Naive thymus-derived CD8-positive, alpha-beta T cell (primary cell): ENCODE measurements at regions of chr20 and their contacts with region 1.

Region 1: DNA sequence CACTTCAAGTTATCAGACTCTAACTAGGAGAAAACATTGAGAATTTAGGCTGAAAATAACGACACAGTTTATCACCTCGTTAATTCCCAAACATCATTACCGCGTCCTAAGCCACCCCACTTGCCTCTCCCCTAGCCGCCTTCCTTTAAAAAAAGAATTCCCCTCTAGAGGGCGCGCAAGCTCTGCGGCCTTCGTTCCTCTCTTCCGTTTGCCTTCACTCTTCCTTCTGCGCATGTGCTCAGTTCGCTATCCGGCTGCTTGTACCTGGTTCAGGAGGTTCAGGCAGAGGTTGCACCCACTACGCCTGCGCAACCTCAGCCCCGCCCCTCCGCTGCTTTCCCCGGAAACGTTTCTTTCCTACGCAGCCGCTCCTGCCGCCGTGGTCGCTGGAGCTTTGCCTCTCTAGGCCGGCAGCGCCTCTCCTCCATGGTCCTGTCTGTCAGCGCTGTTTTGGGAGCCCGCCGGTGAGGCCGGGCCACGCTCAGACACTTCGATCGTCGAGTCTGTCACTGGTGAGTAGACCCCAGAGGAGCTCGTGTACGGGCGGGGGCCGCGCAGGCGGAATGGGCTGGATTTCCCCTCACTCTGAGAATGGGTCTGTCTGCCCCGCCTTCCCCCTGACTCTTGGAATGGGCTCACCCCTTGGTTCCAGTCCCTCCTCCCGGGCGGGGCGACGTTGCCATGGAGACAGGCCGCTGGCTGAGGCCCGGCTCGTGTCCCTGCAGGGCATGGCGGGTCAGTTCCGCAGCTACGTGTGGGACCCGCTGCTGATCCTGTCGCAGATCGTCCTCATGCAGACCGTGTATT is at the start of gene SYS1:
- DNase-seq: peak; percentile 96 to 99 (median 99)
- ATAC-seq: peak; percentile 82 to 84
- H3K4me3 Mint-ChIP-seq: peak within 1 kb of the TSS; percentile 90 to 100 (median 98)
- H3K27ac Mint-ChIP-seq: peak within 1 kb of the TSS; percentile 99 to 100 (median 100)
- H3K4me1 Mint-ChIP-seq: peaks cover 23 to 54% (median 46%) of the 10 kb centered on the region in 4 donors
- H3K27me3 Mint-ChIP-seq: no peaks in the 10 kb centered on the region
- polyA plus RNA-seq, gene SYS1: 34.2 to 46.1 (median 36.2) TPM

Region 2: DNA sequence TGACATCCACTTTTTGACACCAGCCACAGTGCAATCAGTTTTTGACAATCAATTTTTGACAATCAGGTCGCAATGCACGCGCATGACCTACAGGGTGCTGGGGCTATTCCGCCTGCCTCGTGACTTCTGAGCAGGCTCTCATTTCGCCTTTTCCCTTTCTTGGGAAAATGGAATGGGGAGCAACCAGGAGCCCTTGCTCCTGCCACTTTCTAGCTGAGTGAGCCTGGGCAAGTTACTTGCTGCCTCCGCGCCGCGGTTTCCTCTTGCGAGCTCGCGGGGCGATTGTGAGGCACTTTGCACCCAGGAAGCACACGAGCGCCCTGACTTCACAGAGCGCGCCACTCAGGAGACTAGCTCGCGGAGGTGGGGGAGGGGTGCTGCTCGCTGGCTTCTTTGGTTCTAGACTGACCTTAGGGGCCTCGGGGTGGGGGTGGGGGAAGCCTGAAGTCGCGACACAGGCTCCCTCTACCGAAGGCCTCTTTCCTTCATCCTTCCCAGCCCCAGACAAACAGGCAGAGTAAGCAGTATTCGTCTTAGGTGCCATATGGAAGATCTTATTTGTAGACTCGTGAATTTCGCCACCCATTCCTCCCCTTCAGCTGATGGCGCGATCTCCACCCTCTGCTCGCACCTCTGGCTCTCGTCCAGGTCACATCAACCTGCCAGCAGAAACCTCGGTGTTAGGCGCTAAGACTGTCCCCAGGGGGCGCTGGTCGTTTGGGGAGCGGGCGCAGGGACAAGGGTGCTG is 10.5 kb after region 1 on chr20:
- POLR2A ChIA-PET with region 1: interaction called, 95 read pairs
- DNase-seq: peak; percentile 83 to 94 (median 88)
- ATAC-seq: peak; percentile 89 to 90
- H3K4me3 Mint-ChIP-seq: peak overlapping the region; percentile 86 to 96 (median 90)
- H3K27ac Mint-ChIP-seq: peak overlapping the region; percentile 79 to 98 (median 96)
- H3K4me1 Mint-ChIP-seq: peaks cover 10 to 46% (median 39%) of the 10 kb centered on the region in 4 donors
- H3K27me3 Mint-ChIP-seq: no peaks in the 10 kb centered on the region

Region 3: GRCh38 chr20:45406259-45407066 is 43.5 kb after region 1 on chr20:
- POLR2A ChIA-PET with region 1: interaction called, 25 read pairs
- DNase-seq: peak; percentile 23 to 70 (median 45)
- ATAC-seq: peak; percentile 58 to 64
- H3K4me3 Mint-ChIP-seq: peak overlapping the region; percentile 80 to 91 (median 82)
- H3K27ac Mint-ChIP-seq: peak overlapping the region in 8 of 10 donors; percentile 79 to 93 (median 86)
- H3K4me1 Mint-ChIP-seq: peaks cover 12 to 30% (median 25%) of the 10 kb centered on the region in 4 donors
- H3K27me3 Mint-ChIP-seq: peaks cover 0 to 2% (median 0%) of the 10 kb centered on the region in 5 donors

Region 4: DNA sequence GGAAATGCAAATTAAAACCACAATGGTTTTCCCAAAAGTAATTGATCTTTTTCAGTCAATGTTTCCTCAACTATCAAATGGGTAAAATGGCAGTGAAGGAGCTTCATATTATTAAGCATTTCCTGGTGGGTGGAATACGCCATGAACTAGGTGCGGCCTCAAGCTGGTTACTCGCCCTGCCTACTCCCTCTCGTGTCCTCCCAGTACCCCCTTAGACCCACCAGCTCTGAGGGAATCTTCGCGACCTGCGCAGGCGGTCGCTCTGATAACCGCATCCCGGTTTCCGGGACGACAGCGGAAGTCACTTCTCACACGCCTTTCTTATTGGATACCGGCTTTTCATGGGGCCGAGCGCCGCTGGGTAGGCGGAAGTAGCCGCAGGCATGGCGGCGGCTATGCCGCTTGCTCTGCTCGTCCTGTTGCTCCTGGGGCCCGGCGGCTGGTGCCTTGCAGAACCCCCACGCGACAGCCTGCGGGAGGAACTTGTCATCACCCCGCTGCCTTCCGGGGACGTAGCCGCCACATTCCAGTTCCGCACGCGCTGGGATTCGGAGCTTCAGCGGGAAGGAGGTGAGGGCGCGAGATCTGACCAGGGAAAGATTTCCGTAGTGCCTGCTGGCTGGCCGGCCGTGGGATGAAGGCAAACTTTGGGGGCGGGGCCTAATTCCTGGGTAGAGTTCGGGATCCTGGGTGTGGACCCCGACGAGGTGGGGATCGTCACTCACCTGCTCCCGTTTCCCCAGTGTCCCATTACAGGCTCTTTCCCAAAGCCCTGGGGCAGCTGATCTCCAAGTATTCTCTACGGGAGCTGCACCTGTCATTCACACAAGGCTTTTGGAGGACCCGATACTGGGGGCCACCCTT is 53.0 kb after region 1 on chr20 and contains the start of gene PIGT:
- POLR2A ChIA-PET with region 1: interaction called, 39 read pairs
- DNase-seq: peak; percentile 80 to 96 (median 94)
- ATAC-seq: peak; percentile 97
- H3K4me3 Mint-ChIP-seq: peak within 1 kb of the TSS; percentile 90 to 99 (median 96)
- H3K27ac Mint-ChIP-seq: peak within 1 kb of the TSS; percentile 98 to 100 (median 99)
- H3K4me1 Mint-ChIP-seq: peaks cover 26 to 46% (median 38%) of the 10 kb centered on the region in 4 donors
- H3K27me3 Mint-ChIP-seq: no peaks in the 10 kb centered on the region
- polyA plus RNA-seq, gene PIGT: 73.4 to 90.6 (median 73.9) TPM

Region 5: DNA sequence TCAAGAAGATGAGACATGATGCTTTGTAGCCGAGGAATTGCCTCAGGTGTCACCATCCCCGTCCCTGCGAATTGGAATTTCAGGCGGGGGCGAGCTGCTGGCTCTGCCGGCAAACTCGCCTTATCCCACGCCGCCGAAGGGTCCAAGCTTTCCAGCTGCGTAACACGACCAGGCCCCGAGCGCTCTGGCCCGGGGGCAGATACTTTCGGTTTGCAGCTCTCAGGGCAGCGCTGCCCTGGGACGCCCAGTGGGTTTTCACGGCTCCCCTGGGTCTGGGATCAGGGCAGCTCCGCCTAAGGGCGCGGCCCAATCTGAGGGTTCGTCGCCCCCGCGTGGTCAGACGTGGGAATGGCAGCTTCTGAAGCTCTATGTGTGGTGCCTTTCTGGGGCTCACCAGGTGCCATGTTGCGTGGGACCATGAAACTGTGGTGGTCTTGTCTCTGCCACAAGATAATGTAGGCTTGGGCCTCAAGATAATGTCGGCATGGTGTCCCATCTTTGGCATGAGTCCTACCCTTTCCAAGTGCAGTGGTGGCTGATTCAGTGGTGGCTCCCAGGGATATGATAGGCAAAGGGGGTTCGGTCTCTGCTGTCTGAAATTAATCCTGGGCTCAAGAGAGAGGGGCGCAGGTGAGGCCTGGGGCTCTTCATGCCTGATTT is 73.9 kb after region 1 on chr20:
- POLR2A ChIA-PET with region 1: interaction called, 67 read pairs
- DNase-seq: peak; percentile 78 to 92 (median 86)
- ATAC-seq: peak; percentile 99 to 100
- H3K4me3 Mint-ChIP-seq: peak overlapping the region; percentile 75 to 88 (median 84)
- H3K27ac Mint-ChIP-seq: peak overlapping the region; percentile 22 to 86 (median 80)
- H3K4me1 Mint-ChIP-seq: peaks cover 5 to 23% (median 15%) of the 10 kb centered on the region in 4 donors
- H3K27me3 Mint-ChIP-seq: no peaks in the 10 kb centered on the region

Region 6: DNA sequence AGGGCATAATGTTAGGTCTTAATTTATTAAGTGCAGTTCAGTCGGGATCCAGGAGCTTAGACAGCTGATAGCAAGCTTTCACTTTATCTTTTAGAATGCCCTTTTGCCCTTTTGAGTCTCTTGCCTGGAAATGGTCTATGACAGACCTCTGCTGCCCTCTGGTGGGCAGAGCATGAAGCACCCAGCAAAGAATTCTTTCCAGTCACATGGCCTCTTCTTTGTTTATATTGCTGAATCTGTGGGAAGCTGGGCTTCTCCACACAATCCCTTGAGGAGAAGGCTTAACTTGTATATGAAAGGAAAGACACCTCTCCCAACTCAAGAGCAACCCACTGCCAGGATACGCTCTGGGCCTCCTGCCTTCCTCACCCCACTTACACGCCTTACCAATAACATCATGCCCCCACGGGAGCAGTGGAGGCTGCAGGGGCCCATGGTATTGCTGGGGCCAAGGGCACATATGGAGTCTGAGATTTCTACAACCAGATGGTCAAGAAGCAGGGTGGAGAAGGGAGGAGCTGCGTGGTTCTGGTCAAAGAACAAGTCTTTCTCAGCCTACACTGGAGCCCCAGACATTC is 408.3 kb after region 1 on chr20:
- POLR2A ChIA-PET with region 1: interaction called, 11 read pairs
- DNase-seq: peak; percentile 60 to 85 (median 77)
- ATAC-seq: peak; percentile 68 to 70
- H3K4me3 Mint-ChIP-seq: no peak overlapping the region
- H3K27ac Mint-ChIP-seq: peak overlapping the region in 3 of 10 donors; percentile 11 to 53 (median 28)
- H3K4me1 Mint-ChIP-seq: peaks cover 5 to 8% (median 6%) of the 10 kb centered on the region in 4 donors
- H3K27me3 Mint-ChIP-seq: peaks cover 5 to 40% (median 14%) of the 10 kb centered on the region in 5 donors